CD8-positive, alpha-beta T cell (primary cell): ENCODE measurements at regions of chr7 and their contacts with region 1.

Region 1: GRCh38 chr7:65373608-65374351 is at the start of gene ZNF92:
- DNase-seq: peak; percentile 90 to 97 (median 95)
- ATAC-seq: peak; percentile 98
- H3K4me3 ChIP-seq: peak within 1 kb of the TSS; percentile 91 to 98
- H3K4me3 Mint-ChIP-seq: peak within 1 kb of the TSS; percentile 94
- H3K27ac ChIP-seq: peak within 1 kb of the TSS; percentile 79 to 90
- H3K27ac Mint-ChIP-seq: peak within 1 kb of the TSS; percentile 93
- H3K4me1 ChIP-seq: peaks cover 24% of the 10 kb centered on the region
- H3K4me1 Mint-ChIP-seq: peaks cover 52% of the 10 kb centered on the region
- H3K27me3 ChIP-seq: no peaks in the 10 kb centered on the region
- H3K27me3 Mint-ChIP-seq: no peaks in the 10 kb centered on the region
- CTCF ChIP-seq: no peak
- total RNA-seq, gene ZNF92: 31.6 to 37.3 TPM

Region 2: GRCh38 chr7:64307254-64308015 is 1066.3 kb before region 1 on chr7:
- CTCF ChIA-PET with region 1: no interaction called
- POLR2A ChIA-PET with region 1: interaction called, 3 read pairs
- intact Hi-C with region 1: loop called (anchors 2 to 5 kb)
- DNase-seq: peak; percentile 88 to 97 (median 94)
- ATAC-seq: peak; percentile 98
- H3K4me3 ChIP-seq: peak overlapping the region; percentile 71 to 80
- H3K4me3 Mint-ChIP-seq: peak overlapping the region; percentile 95
- H3K27ac ChIP-seq: peak overlapping the region; percentile 77 to 91
- H3K27ac Mint-ChIP-seq: peak overlapping the region; percentile 99
- H3K4me1 ChIP-seq: peaks cover 14% of the 10 kb centered on the region
- H3K4me1 Mint-ChIP-seq: peaks cover 14% of the 10 kb centered on the region
- H3K27me3 ChIP-seq: no peaks in the 10 kb centered on the region
- H3K27me3 Mint-ChIP-seq: no peaks in the 10 kb centered on the region
- CTCF ChIP-seq: no peak

Region 3: GRCh38 chr7:64562626-64563275 is 811.0 kb before region 1 on chr7 and contains the start of gene ZNF680:
- CTCF ChIA-PET with region 1: no interaction called
- POLR2A ChIA-PET with region 1: no interaction called
- intact Hi-C with region 1: loop called (anchors 5 to 10 kb)
- DNase-seq: peak; percentile 78 to 92 (median 89)
- ATAC-seq: peak; percentile 98
- H3K4me3 ChIP-seq: peak within 1 kb of the TSS; percentile 84 to 96
- H3K4me3 Mint-ChIP-seq: peak within 1 kb of the TSS; percentile 99
- H3K27ac ChIP-seq: peak within 1 kb of the TSS; percentile 69 to 71
- H3K27ac Mint-ChIP-seq: peak within 1 kb of the TSS; percentile 97
- H3K4me1 ChIP-seq: peaks cover 10% of the 10 kb centered on the region
- H3K4me1 Mint-ChIP-seq: peaks cover 33% of the 10 kb centered on the region
- H3K27me3 ChIP-seq: no peaks in the 10 kb centered on the region
- H3K27me3 Mint-ChIP-seq: no peaks in the 10 kb centered on the region
- CTCF ChIP-seq: no peak
- total RNA-seq, gene ZNF680: 6.8 to 8.4 TPM

Region 4: DNA sequence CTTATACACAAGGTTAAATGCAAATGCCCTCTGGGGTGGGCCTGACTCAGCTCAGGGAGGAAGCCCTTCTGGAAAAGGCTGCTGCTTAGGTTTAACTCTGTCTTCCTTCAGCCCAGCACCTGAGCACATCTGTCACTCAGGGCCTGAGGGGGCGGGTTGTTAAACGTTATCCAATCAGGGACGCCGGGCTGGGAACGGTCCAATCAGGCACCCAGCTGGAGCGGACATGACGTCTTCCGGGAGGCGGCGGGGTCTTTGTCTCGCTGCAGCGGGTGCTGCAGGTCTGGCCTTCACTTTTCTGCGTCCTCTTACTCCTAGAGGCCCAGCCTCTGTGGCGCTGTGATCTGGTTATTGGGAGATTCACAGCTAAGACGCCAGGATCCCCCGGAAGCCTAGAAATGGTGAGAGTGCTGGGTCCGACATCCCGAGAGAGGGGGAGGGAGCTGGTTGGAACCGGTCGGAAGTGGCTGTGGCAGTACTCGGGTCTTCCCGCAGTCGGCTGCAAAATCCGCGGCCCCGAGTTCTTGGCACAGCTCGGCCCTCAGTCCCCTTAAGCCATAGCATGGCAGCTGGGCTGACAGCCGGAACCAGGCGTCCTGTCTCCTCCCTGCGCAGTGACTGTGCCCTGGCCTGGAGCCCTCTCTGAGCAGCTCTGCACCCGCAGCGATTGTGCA is 579.5 kb before region 1 on chr7 and contains the start of gene ZNF138:
- CTCF ChIA-PET with region 1: no interaction called
- POLR2A ChIA-PET with region 1: interaction called, 4 read pairs
- intact Hi-C with region 1: loop called (anchors 5 to 10 kb)
- DNase-seq: peak; percentile 88 to 96 (median 94)
- ATAC-seq: peak; percentile 98
- H3K4me3 ChIP-seq: peak within 1 kb of the TSS; percentile 75 to 79
- H3K4me3 Mint-ChIP-seq: peak within 1 kb of the TSS; percentile 99
- H3K27ac ChIP-seq: peak within 1 kb of the TSS; percentile 87 to 90
- H3K27ac Mint-ChIP-seq: peak within 1 kb of the TSS; percentile 98
- H3K4me1 ChIP-seq: peaks cover 21% of the 10 kb centered on the region
- H3K4me1 Mint-ChIP-seq: peaks cover 35% of the 10 kb centered on the region
- H3K27me3 ChIP-seq: no peaks in the 10 kb centered on the region
- H3K27me3 Mint-ChIP-seq: no peaks in the 10 kb centered on the region
- CTCF ChIP-seq: no peak
- total RNA-seq, gene ZNF138: 4.9 to 5.3 TPM

Region 5: GRCh38 chr7:65037740-65038678 is 335.8 kb before region 1 on chr7:
- CTCF ChIA-PET with region 1: no interaction called
- POLR2A ChIA-PET with region 1: no interaction called
- intact Hi-C with region 1: loop called (anchors 1 to 10 kb)
- DNase-seq: peak; percentile 87 to 97 (median 94)
- ATAC-seq: peak; percentile 89
- H3K4me3 ChIP-seq: peak overlapping the region; percentile 52 to 69
- H3K4me3 Mint-ChIP-seq: peak overlapping the region; percentile 79
- H3K27ac ChIP-seq: peak overlapping the region; percentile 62 to 74
- H3K27ac Mint-ChIP-seq: peak overlapping the region; percentile 80
- H3K4me1 ChIP-seq: peaks cover 11% of the 10 kb centered on the region
- H3K4me1 Mint-ChIP-seq: peaks cover 14% of the 10 kb centered on the region
- H3K27me3 ChIP-seq: no peaks in the 10 kb centered on the region
- H3K27me3 Mint-ChIP-seq: no peaks in the 10 kb centered on the region
- CTCF ChIP-seq: peak; percentile 16

Region 6: DNA sequence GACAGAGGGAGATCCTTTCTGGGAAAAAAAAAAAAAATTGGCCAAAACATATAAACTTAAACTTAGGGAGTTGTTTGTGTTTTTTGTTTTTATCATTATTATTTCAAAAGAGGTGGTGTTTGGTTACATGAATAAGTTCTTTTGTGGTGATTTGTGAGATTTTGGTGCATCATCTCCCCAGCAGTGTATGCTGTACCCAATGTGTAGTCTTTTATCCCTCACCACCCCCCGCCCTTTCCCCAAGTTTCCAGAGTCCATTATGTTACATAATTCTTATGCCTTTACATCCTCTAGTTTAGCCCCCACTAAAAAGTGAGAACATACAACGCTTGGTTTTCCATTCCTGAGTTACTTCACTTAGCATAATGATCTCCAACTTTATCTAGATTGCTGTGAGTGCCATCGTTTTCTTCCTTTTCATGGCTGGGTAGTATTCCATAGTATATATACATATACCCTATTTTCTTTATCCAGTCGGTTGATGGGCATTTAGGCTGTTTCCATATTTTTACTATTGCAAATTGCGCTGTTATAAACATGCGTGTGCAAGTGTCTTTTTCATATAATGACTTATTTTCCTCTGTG is 148.3 kb before region 1 on chr7:
- CTCF ChIA-PET with region 1: no interaction called
- POLR2A ChIA-PET with region 1: no interaction called
- intact Hi-C with region 1: no loop called
- DNase-seq: no peak
- ATAC-seq: peak; percentile 23
- H3K4me3 ChIP-seq: no peak overlapping the region
- H3K4me3 Mint-ChIP-seq: no peak overlapping the region
- H3K27ac ChIP-seq: no peak overlapping the region
- H3K27ac Mint-ChIP-seq: no peak overlapping the region
- H3K4me1 ChIP-seq: no peaks in the 10 kb centered on the region
- H3K4me1 Mint-ChIP-seq: no peaks in the 10 kb centered on the region
- H3K27me3 ChIP-seq: no peaks in the 10 kb centered on the region
- H3K27me3 Mint-ChIP-seq: no peaks in the 10 kb centered on the region
- CTCF ChIP-seq: no peak

Region 7: GRCh38 chr7:65981965-65982792 is 608.4 kb after region 1 on chr7 and contains the start of gene GUSB:
- CTCF ChIA-PET with region 1: no interaction called
- POLR2A ChIA-PET with region 1: no interaction called
- intact Hi-C with region 1: loop called in 1 of 2 experiments (anchors 10 kb)
- DNase-seq: peak; percentile 80 to 93 (median 90)
- ATAC-seq: peak; percentile 87
- H3K4me3 ChIP-seq: peak within 1 kb of the TSS; percentile 83 to 90
- H3K4me3 Mint-ChIP-seq: peak within 1 kb of the TSS; percentile 85
- H3K27ac ChIP-seq: peak within 1 kb of the TSS; percentile 69 to 73
- H3K27ac Mint-ChIP-seq: peak within 1 kb of the TSS; percentile 88
- H3K4me1 ChIP-seq: peaks cover 18% of the 10 kb centered on the region
- H3K4me1 Mint-ChIP-seq: peaks cover 14% of the 10 kb centered on the region
- H3K27me3 ChIP-seq: no peaks in the 10 kb centered on the region
- H3K27me3 Mint-ChIP-seq: no peaks in the 10 kb centered on the region
- CTCF ChIP-seq: no peak
- total RNA-seq, gene GUSB: 37.0 to 41.8 TPM